ENCODE measurements at regions of chr1 and their contacts with region 1.

Region 1: DNA sequence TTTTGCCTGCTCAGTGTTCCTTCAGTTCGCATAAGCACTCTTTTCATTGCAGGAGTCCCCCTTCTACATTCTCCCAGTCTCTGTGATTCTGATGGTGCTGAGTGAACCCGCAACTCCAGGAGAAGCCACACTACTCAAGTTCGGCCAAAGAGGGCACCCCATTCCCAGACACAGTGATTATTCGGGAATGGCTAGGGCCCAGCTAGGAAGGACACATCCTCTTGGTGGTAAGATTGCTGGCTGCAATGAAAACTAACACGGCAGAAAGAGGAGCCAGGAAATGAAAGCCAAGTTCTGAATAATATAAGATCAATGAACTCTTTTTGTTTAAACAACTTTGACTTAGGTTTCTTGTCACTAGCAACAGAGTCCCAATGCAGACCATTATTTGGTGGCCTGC is 14.9 kb downstream of the CREG1 start:
- DNase-seq: no peak
- H3K4me3 ChIP-seq: no peak overlapping the region
- H3K27ac ChIP-seq: no peak overlapping the region
- H3K4me1 ChIP-seq: no peaks in the 10 kb centered on the region
- H3K27me3 ChIP-seq: no peaks in the 10 kb centered on the region
- CTCF ChIP-seq: no peak
- POLR2A ChIP-seq: no peak

Region 2: GRCh38 chr1:167066333-167067122 is 472.1 kb before region 1 on chr1:
- intact Hi-C with region 1: loop called (anchors 5 kb)
- DNase-seq: peak; percentile 86
- H3K4me3 ChIP-seq: peak overlapping the region in 1 of 2 donors; percentile 29
- H3K27ac ChIP-seq: no peak overlapping the region
- H3K4me1 ChIP-seq: no peaks in the 10 kb centered on the region
- H3K27me3 ChIP-seq: no peaks in the 10 kb centered on the region
- CTCF ChIP-seq: peak; percentile 73 to 87 (median 82)
- POLR2A ChIP-seq: no peak